Activated CD4-positive, alpha-beta T cell treated with anti-CD3 and anti-CD28 coated beads, Interleukin-2, amount 10 ng/mL, durations not matched to agents 24 days and 14 days (primary cell): ENCODE measurements at regions of chr11 and their contacts with region 1.

Region 1: DNA sequence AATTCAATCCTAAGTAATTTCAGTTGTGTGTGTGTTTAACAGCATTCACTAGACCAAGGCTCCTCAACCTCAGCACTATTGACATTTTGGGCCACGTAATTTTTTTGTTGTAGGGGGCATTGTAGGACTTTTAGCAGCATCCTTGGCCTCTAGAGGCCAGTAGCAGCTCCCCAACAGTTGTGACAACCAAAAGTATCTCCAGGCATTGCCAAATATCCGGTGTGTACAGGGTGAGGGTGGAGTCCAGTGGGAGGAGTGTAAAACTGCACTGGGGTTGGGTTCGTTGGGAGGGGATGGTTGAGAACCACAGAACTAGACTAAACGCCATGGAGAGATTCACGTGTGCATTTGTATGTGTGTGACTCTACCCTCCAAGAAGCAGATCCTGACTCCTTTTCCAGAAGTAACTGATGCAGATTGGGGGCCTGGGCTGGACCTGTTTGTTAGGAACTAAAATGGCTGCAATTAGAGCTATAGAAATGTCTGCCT is 5.9 kb upstream of the PHF21A start:
- DNase-seq: peak; percentile 91
- H3K4me3 Mint-ChIP-seq: peak overlapping the region; percentile 45
- H3K27ac Mint-ChIP-seq: peak overlapping the region; percentile 67
- H3K4me1 Mint-ChIP-seq: peaks cover 18% of the 10 kb centered on the region
- H3K27me3 Mint-ChIP-seq: peaks cover 5% of the 10 kb centered on the region

Region 2: GRCh38 chr11:46315033-46315738 is 188.0 kb after region 1 on chr11:
- intact Hi-C with region 1: loop called (anchors 2 kb)
- DNase-seq: peak; percentile 93
- H3K4me3 Mint-ChIP-seq: no peak overlapping the region
- H3K27ac Mint-ChIP-seq: no peak overlapping the region
- H3K4me1 Mint-ChIP-seq: peaks cover 14% of the 10 kb centered on the region
- H3K27me3 Mint-ChIP-seq: no peaks in the 10 kb centered on the region